ENCODE measurements at regions of chr7 and their contacts with region 1.

Region 1: DNA sequence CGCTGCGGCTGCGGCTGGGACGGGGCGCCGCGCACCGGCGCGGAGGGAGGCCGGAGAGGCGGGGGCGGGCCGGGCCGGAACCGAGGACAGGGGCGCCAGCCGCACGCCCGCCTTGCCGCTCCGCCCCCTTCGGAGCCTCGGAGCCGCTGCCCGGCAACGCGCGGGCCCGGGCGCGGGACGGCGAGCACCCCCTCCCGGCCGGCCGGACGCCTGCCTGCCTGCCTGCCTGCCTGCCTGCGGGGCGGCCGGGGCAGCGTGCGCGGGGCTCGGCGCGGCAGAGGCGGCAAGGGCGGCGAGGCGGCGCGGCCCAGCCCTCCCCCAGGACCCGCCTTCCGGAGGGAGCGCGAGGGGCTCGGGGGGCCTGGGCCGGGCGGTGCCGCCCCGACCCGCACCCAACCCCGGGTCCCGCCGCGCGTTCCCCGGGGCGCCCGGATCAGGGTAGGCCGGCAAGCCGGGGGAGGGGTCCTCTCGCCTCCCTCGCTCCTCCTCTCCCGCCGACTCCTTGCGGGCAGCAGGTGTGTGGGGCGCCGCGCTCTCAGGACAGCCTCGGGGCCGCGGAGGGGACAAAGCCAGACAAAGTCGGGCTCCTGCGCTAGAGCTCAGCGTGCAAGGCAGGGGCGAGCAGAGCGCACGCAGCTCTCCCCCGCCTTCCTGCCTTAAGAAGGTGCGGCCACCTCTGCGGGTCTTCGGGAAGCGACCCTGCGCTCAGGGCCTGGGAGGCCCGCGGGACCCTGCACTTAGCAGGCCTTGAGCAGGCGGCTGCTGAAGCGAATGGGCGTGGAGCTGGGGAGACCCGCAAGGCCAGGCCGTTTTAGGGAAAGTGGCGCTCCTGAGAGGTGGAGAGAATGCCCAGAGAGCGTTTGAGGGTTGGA is at the start of gene KIAA1549:
- DNase-seq: peak in 3 of 4 donors; percentile 61 to 91 (median 80)
- ATAC-seq: peak; percentile 93
- H3K4me3 ChIP-seq: peak within 1 kb of the TSS; percentile 51 to 52
- H3K27ac ChIP-seq: no peak within 1 kb of the TSS
- H3K4me1 ChIP-seq: peaks cover 0 to 17% of the 10 kb centered on the region in 2 donors
- H3K27me3 ChIP-seq: peaks cover 0 to 40% of the 10 kb centered on the region in 2 donors
- CTCF ChIP-seq: no peak
- polyA plus RNA-seq, gene KIAA1549: 13.9 to 16.9 (median 15.6) TPM

Region 2: DNA sequence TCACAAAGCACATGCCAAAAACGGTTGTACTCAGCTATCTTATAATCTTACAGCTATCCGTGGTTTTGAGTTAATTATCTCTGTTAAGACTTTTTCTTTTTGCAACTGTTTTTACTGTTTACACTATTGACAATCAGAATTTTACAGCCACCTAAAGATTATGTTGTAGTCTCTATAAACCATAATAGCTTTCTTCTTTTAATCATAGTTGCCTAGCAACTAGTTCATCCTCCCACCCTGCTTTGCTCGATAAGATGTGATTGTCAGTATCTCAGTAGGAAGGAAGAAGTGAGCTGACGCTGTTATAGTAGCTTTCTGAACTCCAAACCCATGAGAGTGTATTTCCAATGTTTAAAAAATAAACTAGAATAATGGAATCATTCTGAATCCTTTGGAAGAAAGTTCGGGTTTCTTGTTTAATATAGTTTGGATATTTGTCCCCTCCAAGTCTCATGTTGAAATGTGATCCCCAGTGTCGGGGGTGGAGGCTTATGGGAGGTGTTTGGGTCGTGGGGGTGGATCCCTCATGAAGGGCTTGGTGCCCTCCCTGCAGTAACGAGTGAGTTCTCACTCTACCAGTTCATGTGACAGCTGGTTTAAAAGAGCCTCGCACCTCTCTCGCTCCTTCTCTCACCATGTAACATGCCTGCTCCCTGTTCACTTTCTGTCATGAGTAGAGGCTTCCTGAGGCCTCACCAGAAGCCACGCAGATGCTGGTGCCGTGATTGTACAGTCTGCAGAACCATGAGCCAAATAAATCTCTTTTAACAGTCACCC is 348.6 kb before region 1 on chr7:
- intact Hi-C with region 1: no loop called
- DNase-seq: no peak
- ATAC-seq: no peak
- H3K4me3 ChIP-seq: no peak overlapping the region
- H3K27ac ChIP-seq: no peak overlapping the region
- H3K4me1 ChIP-seq: no peaks in the 10 kb centered on the region
- H3K27me3 ChIP-seq: no peaks in the 10 kb centered on the region
- CTCF ChIP-seq: no peak

Region 3: DNA sequence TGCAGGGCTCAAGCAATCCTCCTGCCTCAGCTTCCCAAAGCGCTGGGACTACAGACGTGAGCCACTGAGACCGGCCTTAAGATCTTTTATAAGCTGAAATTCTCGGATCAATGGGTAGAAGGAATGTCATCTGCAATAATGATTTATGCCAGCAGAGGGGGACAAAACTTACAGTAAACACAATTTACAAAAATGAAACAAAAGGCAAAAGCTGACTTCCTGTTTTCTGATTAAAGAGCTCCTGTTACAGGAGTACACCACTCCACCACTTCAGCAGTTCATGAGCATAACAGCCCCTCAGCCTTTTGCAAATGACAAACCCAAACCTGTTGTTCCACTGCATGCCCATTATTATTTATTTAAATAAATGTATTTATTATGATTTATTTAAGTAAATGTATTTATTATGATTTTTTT is 95.1 kb before region 1 on chr7:
- intact Hi-C with region 1: loop called in 1 of 2 experiments (anchors 10 kb)
- DNase-seq: peak in 2 of 4 donors; percentile 25 to 63
- ATAC-seq: peak; percentile 84
- H3K4me3 ChIP-seq: no peak overlapping the region
- H3K27ac ChIP-seq: no peak overlapping the region
- H3K4me1 ChIP-seq: no peaks in the 10 kb centered on the region
- H3K27me3 ChIP-seq: no peaks in the 10 kb centered on the region
- CTCF ChIP-seq: peak; percentile 63 to 79